Cardiac septum (tissue), 1 donor: ENCODE measurements at regions of chr15 and their contacts with region 1.

Region 1: DNA sequence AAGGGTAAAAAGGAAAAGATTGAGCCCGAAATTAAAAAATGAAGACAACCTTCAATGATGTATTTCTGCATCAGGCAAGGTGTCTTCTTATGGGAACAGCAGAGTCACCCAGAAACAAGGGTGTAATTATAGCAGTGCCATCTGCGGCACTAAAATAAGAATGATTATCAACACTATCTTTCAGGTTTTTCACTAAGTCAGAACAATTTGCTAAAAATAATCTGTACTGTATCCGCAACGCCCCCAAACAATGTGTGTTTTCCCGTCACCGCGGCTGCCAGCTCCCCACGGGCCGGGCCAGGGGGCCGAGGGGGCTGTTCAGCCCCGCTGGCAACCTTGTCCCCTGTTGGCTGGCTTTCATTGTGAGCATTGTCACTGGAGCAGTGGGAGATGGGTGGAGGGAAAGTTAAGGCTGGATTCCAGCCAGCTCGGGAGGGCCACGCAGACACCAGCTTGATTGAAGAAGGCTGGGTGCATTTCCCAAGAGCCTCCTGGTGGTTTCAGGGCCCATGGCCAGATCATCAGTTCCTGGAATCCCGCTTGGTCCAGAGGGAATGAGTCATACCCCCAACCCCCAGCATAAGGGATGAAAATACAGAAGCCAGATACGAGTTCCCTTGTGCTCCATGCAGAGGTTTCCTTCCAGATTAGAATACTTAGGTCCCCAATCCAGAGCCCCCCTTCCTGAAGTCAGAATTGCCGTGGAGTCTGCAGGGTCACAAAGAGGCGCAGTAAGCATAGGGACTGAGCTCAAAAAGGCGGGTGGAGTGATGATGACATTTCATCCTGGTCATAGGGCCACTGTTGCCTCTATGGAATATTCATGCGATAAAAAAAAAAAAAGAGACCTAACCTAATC is 90.2 kb upstream of the KLF13 start:
- DNase-seq: peak; percentile 88

Region 2: DNA sequence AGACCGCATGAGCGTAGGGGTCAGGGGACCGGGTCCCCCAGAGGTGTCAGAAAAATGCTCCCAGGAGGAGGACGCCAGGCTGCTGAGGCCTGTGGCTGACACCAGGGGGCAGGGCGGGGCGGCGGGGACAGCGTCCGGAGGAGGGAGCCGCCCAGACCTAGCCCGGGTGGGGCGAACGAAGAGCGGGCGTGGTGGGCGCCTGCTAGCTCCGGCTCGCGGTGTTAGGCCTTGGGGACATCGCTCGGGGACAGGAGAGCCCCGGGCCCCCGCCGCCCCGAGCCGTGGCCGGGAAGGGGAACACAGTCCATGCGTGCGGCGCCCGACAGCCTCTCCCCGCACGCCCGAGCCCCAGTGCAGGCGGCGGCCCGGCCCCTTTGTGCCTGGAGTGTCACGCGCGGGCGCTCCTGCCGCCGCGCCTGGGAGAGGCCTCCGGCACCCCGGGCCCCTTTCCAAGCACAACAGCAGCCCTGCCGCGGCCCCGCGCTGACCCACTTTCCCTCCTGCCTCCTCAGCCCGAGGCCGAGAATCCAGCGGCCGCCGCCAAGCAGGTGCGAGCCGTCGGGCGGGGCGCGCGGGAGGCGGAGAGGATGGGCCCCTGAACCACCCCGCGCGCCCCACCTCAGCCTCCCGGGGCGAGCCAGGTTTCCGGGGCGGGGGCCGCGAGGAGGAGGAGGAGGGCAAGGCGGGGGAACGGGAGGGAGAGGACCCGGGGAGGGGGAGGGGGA is 20.8 kb before region 1 on chr15:
- intact Hi-C with region 1: loop called (anchors 1 kb)
- DNase-seq: peak; percentile 95

Region 3: DNA sequence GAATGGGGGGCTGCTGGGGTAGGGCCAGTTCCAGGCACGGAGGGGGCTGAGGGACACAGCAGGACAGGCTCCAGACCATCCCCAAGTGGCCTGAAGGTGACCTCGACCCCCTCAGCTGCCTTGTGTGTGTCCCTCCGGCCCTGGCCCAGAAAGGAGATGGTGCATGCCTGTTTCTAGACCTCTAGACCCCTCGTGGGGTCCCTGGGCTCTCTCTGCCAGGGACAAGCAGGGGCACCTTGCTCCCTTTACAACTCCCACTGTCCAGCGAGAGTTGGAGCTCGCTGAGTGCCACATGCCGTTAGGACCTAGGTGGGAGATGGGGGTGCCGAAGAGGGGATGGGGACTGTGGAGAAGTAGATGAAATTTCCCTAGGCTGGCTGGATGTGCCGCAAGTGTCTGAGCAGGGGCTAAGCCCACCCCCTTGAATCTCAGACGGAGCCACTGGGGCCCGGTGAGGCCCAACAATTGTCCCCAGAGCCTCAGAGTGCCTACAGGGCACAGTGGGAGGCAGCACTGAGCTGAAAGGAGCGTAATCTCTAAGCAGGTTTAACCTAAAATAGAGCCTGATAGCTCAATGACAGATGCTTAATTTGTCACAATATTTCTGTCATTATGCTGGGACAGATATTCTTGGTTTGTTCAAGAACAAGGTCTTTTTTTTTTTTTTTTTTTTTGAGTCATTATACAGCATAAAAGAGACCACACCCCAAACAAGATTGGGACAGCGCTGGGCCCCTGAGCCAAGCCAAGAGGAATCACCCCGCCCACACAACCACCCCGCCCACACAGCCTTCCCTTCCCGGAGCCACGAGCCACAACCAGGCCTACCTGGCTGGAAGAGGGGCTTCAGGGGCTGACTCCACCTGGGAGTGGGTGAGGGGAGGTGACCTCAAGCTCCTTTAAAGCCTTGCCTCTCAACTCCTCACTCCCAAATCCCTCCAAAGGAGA is 66.6 kb after region 1 on chr15:
- intact Hi-C with region 1: loop called (anchors 5 kb)
- DNase-seq: no peak

Region 4: GRCh38 chr15:31352911-31353811 is 116.7 kb after region 1 on chr15:
- intact Hi-C with region 1: loop called (anchors 5 kb)
- DNase-seq: peak; percentile 88

Region 5: DNA sequence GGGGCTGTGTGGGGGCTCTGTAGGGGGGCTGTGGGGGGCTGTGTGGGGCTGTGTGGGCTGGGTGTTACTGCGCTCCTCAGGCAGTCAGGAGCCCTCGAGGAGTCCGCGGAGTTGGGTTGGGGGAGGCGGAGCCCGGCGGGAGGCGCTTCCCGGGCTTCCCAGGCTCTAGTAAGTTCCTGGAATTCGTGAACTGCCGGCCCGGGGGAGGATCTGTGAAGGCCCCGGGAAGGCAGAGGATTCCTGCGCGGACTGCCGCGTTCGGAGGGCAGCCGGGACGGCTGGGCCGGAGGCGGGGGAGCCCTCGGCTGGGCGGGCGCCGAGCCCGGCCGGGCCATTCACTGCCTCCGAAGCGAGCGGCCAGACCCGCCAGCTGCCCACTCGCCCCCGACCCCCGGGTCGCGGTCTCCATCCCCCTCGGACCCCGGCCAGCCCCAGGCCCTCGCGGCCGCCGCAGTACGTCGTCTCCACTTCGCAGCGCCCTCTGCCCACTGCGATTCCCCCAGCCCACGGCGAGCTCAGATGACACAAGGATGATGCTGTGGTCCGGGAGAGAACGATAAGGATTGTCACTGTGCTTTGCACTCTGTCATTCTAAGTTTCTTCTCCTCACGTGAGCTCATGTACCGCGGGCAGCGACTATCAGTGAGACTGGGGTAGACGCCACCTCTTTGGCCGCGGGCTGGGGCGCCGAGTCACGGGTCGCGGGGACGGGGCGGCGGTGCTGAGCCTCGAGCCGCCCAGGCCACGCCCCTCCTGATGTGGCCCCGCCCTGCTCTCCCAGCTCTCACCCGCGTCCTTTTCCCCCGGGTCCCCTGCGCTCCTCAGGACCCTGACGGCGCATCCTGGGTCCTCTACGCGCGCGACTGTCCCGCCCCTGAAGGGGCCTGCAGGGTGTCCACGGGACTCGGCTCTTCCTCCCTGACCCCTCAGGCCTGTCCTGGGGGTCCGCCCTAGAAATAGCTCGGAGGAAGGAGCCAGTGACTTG is 155.6 kb after region 1 on chr15:
- intact Hi-C with region 1: loop called (anchors 5 kb)
- DNase-seq: peak; percentile 94